Colonic mucosa (tissue), 4 donors: ENCODE measurements at regions of chr4 and their contacts with region 1.

Region 1: DNA sequence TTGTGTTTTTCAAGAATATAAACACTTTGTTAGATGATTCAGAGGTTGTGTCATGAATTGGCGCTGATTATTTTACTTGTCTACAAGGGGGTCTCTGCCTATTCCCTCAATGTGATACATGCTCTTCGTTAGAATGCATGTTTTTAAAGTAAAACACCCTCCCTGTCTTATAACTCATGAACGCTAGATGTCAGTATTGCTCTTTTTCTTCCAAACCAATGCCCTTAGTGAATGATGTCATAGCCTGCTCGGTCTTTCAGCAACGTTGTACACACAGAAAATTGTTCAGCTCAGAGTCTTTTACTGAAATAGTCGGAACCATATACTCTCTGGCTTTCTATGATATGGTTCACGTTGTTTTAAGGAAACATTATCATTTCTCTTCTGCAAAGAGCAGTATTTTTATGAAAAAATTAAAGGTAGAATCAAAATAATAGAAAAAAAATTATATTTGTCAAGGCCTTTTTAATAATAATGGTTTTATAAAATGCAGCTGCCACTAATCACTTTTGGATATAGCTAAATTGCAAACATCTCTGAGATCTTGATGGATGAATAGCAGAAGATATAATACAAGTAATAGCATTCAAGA is 292.9 kb downstream of the TLL1 start:
- DNase-seq: peak; percentile 18
- H3K4me3 ChIP-seq: no peak overlapping the region
- H3K27ac ChIP-seq: no peak overlapping the region
- H3K4me1 ChIP-seq: no peaks in the 10 kb centered on the region
- H3K27me3 ChIP-seq: no peaks in the 10 kb centered on the region
- CTCF ChIP-seq: peak; percentile 54

Region 2: DNA sequence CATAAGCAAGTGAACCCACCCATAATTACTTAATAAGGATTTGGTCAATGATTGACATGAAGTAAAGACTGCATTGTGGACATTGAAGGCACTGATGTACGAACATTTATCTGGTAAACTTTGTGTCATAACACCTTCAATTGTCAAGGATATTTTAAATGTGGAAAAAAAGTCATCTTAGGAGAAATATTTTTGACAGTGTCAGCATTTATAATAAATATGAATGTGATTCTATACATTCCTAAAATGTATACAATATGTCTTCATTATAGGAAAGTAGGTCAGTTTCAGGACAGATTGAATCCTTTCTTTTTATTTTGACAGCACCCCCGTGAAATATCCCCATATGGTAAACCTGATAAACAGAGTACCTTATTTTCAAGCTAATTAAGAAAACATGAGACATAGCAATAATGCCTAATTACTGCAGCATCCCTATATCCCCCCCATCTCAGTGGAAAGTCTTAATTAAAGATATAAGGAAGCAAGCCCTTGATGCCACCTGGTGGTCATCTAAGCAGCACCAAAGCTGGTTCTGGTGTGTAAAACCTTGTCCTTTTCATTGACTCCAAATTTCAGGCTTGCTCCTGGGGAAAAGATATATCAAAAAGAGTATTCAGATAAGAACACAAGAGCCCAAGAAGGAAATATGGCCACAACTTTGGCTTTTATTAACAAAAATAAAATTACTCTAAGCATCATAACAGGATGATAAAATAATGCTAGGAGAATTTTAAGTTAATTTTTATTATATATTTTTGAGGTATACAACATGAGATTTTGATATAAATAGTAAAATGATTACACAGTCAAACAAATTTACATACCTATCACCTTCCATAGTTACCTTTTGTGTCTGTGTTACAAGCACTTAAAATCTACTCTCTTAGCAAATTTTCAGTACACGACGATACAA is 86.8 kb after region 1 on chr4:
- intact Hi-C with region 1: loop called (anchors 5 kb)
- DNase-seq: no peak
- H3K4me3 ChIP-seq: no peak overlapping the region
- H3K27ac ChIP-seq: no peak overlapping the region
- H3K4me1 ChIP-seq: no peaks in the 10 kb centered on the region
- H3K27me3 ChIP-seq: no peaks in the 10 kb centered on the region
- CTCF ChIP-seq: peak; percentile 16

Region 3: GRCh38 chr4:166594326-166594946 is 428.5 kb after region 1 on chr4:
- intact Hi-C with region 1: loop called (anchors 5 kb)
- DNase-seq: peak; percentile 31
- H3K4me3 ChIP-seq: no peak overlapping the region
- H3K27ac ChIP-seq: no peak overlapping the region
- H3K4me1 ChIP-seq: no peaks in the 10 kb centered on the region
- H3K27me3 ChIP-seq: no peaks in the 10 kb centered on the region
- CTCF ChIP-seq: peak; percentile 32

Region 4: GRCh38 chr4:167622481-167623246 is 1456.7 kb after region 1 on chr4:
- intact Hi-C with region 1: loop called (anchors 10 kb)
- DNase-seq: peak; percentile 34
- H3K4me3 ChIP-seq: no peak overlapping the region
- H3K27ac ChIP-seq: no peak overlapping the region
- H3K4me1 ChIP-seq: no peaks in the 10 kb centered on the region
- H3K27me3 ChIP-seq: no peaks in the 10 kb centered on the region
- CTCF ChIP-seq: peak; percentile 39